ENCODE measurements at regions of chr1 and their contacts with region 1.

Region 1: GRCh38 chr1:207321079-207321789 is at the start of gene CD55:
- DNase-seq: peak; percentile 97 to 98
- ATAC-seq: peak; percentile 89 to 91
- H3K4me3 ChIP-seq: peak within 1 kb of the TSS; percentile 82 to 99 (median 95)
- H3K27ac ChIP-seq: peak within 1 kb of the TSS; percentile 96 to 100 (median 98)
- H3K4me1 ChIP-seq: peaks cover 17 to 22% of the 10 kb centered on the region in 2 donors
- H3K27me3 ChIP-seq: no peaks in the 10 kb centered on the region
- CTCF ChIP-seq: peak in 3 of 5 experiments; percentile 30 to 32 (median 31)
- POLR2A ChIP-seq: peak; percentile 96 to 97
- total RNA-seq, gene CD55: 75.2 to 428 (median 110) TPM

Region 2: DNA sequence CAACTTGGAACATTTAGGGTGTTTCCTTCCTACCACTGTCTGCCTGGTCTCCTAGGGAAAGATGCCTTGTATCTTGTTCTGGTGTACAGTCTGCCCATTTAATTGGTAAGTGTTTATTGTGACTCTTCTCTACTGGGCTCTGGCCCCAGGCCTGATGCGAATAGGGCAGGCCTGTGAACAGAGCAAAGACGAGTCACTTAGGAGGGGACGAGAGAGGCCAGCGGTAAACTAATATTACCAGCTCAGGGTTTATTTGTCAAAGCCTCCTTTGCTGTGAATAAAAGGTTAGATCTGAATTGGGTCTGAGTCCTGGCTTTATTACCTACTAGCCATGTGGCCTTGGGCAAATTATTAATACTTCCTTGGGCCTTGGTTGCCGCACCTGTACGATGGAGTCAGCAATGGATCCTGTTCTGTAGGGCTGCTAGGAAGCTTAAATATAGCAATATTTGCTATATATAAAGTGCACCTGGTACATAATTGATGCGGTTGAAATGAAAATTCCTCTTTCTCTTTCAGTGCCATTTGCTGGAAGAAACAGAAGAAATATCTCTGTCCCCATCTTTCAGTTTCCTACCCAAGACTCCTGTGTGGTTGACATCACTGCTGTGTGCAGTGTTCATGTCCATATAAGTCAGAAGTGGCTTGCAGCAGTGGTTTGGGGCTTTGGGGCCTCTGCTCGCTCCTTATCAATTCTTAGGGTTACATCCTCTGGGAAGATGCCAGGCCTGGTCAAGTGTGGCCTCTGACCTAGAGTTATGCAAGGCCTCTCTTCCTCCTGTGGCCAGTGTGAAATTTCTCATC is 604.2 kb before region 1 on chr1:
- in situ Hi-C with region 1: loop called in 2 of 4 experiments (anchors 25 kb)
- intact Hi-C with region 1: no loop called
- DNase-seq: no peak
- ATAC-seq: no peak
- H3K4me3 ChIP-seq: no peak overlapping the region
- H3K27ac ChIP-seq: peak overlapping the region; percentile 76 to 97 (median 85)
- H3K4me1 ChIP-seq: peaks cover 90% of the 10 kb centered on the region in 2 donors
- H3K27me3 ChIP-seq: no peaks in the 10 kb centered on the region
- CTCF ChIP-seq: no peak
- POLR2A ChIP-seq: no peak

Region 3: DNA sequence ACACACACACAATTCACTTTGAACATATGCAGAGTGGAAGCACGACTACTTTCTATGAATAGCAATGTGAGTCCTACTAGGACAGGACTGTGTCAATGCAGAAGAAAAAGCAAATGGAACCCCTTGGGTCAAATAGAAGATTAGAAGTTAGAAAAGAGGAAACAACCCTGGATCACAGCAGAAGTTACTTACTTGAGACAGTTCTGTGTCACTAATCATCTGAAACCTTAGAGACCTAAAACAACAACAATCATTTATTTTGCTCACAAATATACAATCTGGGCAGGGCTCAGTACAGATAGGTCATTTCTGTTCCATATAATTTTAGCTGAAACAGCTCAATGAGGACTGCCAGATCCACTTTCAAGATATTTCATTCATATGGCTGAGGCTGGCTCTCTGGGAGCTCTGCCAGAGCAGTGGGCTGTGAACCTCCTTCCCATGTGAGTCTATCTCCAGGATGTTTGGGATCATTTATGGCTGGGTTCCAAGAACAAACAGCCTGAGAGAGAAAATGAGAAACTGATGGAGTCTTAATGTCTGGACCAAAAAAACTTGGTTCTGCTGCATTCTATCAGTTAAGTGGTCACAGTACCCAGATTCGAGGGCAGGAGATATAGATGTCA is 506.4 kb before region 1 on chr1:
- in situ Hi-C with region 1: no loop called
- intact Hi-C with region 1: no loop called
- DNase-seq: no peak
- ATAC-seq: no peak
- H3K4me3 ChIP-seq: no peak overlapping the region
- H3K27ac ChIP-seq: no peak overlapping the region
- H3K4me1 ChIP-seq: peaks cover 0 to 4% of the 10 kb centered on the region in 2 donors
- H3K27me3 ChIP-seq: no peaks in the 10 kb centered on the region
- CTCF ChIP-seq: no peak
- POLR2A ChIP-seq: no peak

Region 4: DNA sequence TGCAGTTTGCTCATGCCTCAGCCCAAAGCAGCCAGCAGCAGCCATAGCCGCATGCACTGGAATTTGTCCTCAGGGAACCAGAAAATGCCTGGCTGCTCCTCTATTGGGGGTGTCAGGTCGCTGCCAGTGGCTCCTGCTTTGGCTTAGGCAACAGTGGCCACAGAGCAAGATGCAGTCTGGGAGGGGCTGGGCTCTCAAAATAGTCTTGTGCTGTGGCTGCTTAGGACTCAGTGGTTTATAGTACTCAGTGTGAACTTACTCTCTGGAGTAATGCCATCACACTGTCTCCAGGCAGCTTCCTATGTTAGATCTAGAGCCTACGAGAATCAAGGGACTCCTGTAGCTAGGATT is 25.3 kb after region 1 on chr1:
- in situ Hi-C with region 1: no loop called
- intact Hi-C with region 1: loop called (anchors 1 kb)
- DNase-seq: peak; percentile 90 to 94
- ATAC-seq: peak; percentile 98
- H3K4me3 ChIP-seq: peak overlapping the region in 1 of 4 donors; percentile 39
- H3K27ac ChIP-seq: peak overlapping the region; percentile 90 to 93 (median 90)
- H3K4me1 ChIP-seq: peaks cover 29 to 43% of the 10 kb centered on the region in 2 donors
- H3K27me3 ChIP-seq: no peaks in the 10 kb centered on the region
- CTCF ChIP-seq: no peak
- POLR2A ChIP-seq: peak in 1 of 2 donors; percentile 30